ENCODE measurements at regions of chr15 and their contacts with region 1.

Region 1: GRCh38 chr15:42548253-42549031 is at the starts of genes HAUS2 and LRRC57:
- H3K4me3 Mint-ChIP-seq: peak within 1 kb of the TSS; percentile 92
- H3K27ac Mint-ChIP-seq: peak within 1 kb of the TSS; percentile 98
- H3K4me1 Mint-ChIP-seq: peaks cover 59% of the 10 kb centered on the region
- H3K27me3 Mint-ChIP-seq: no peaks in the 10 kb centered on the region

Region 2: DNA sequence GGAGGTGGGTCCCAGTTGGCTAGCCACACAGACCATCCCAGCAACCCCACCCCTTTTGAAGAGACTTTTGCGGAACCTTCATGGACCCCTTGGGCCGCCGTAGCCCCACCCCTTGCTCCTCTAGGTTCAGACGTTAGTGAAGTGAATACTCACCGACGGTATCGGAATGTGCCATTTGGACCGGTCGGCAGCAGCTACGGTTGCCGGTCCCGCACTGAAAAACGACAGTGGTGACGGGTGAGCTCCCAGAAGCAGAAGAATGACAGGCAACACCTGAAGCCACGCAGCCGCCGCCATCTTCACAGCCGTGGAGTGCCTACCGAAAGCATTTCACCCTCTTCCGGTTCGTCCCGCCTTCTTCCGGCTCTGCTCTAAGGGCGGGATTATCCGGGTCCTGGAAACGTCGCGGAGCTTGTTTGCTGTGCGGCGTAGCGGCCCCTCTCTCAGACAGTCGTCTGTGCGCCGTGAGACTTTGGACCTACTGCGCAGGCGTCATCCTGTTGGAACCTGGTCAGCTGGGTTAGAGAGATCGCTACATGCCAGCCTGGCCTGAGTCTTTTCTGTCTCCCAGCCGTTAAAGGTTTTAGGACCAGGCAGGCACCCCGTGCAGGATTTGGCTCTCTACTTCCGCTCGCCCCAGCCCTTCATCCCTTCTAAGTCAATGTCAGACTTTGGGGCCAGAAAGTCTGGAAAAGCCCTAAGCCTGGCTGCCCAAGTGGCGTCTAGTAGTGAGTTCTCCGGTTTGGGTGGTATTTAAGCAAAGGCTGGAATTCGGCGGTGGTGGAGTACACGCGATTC is 275.1 kb before region 1 on chr15 and contains the starts of genes GANC and TMEM87A:
- intact Hi-C with region 1: loop called (anchors 10 kb)
- H3K4me3 Mint-ChIP-seq: peak within 1 kb of the TSS; percentile 95
- H3K27ac Mint-ChIP-seq: peak within 1 kb of the TSS; percentile 96
- H3K4me1 Mint-ChIP-seq: peaks cover 40% of the 10 kb centered on the region
- H3K27me3 Mint-ChIP-seq: no peaks in the 10 kb centered on the region

Region 3: GRCh38 chr15:42490671-42491544 is 57.5 kb before region 1 on chr15 and contains the start of gene ZNF106:
- intact Hi-C with region 1: loop called (anchors 5 kb)
- H3K4me3 Mint-ChIP-seq: peak within 1 kb of the TSS; percentile 95
- H3K27ac Mint-ChIP-seq: peak within 1 kb of the TSS; percentile 97
- H3K4me1 Mint-ChIP-seq: peaks cover 59% of the 10 kb centered on the region
- H3K27me3 Mint-ChIP-seq: no peaks in the 10 kb centered on the region

Region 4: GRCh38 chr15:42558739-42559138 is 10.3 kb after region 1 on chr15:
- intact Hi-C with region 1: no loop called
- H3K4me3 Mint-ChIP-seq: no peak overlapping the region
- H3K27ac Mint-ChIP-seq: no peak overlapping the region
- H3K4me1 Mint-ChIP-seq: peaks cover 5% of the 10 kb centered on the region
- H3K27me3 Mint-ChIP-seq: no peaks in the 10 kb centered on the region

Region 5: GRCh38 chr15:42575188-42576039 is 27.0 kb after region 1 on chr15 and contains the start of gene STARD9:
- intact Hi-C with region 1: loop called (anchors 2 kb)
- H3K4me3 Mint-ChIP-seq: peak within 1 kb of the TSS; percentile 96
- H3K27ac Mint-ChIP-seq: peak within 1 kb of the TSS; percentile 81
- H3K4me1 Mint-ChIP-seq: peaks cover 26% of the 10 kb centered on the region
- H3K27me3 Mint-ChIP-seq: peaks cover 50% of the 10 kb centered on the region